ENCODE measurements at regions of chr9 and their contacts with region 1.

Region 1: DNA sequence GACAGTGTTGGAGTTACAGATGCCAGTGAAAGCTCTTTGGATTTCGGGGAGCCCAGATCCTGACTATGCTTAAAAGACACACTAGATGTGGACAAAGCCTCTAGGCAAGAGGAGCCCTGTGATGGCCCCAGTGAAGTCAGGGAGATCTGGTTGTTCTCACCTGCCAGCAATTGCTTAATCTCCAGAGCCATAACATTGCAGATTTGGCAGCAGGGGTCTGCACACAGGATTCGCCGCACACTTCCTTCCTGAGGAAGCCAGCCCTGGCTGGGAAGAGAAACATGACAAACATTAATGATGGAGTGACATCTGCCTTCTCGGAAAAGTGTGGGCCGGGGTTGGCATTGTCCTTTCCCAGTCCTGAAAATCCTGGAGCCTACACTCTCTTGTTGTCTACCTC is 65.2 kb upstream of the PHF24 start:
- DNase-seq: no peak
- H3K4me3 ChIP-seq: no peak overlapping the region
- H3K27ac ChIP-seq: peak overlapping the region in 1 of 2 donors; percentile 66
- H3K4me1 ChIP-seq: no peaks in the 10 kb centered on the region
- H3K27me3 ChIP-seq: no peaks in the 10 kb centered on the region
- CTCF ChIP-seq: no peak
- POLR2A ChIP-seq: no peak

Region 2: DNA sequence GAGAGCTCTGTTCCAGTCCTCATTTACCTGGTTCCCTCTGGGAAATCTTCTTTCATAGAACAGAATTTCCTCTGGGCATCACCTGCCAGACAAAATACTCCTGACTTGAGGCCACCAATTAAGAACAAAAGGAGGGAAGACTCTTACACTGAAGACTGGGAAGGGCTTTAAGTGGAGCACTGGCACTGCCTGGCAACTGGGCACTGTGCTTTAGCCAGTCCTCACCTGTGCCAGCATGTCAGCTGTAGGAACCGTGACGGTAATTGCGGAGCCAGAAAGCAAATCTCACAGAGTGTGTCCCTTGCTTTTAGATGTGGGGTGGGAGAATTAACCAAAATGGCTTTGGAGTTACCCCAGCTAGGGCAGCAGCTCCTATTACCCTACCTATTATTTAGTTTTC is 475.2 kb before region 1 on chr9:
- intact Hi-C with region 1: no loop called
- DNase-seq: no peak
- H3K4me3 ChIP-seq: no peak overlapping the region
- H3K27ac ChIP-seq: no peak overlapping the region
- H3K4me1 ChIP-seq: no peaks in the 10 kb centered on the region
- H3K27me3 ChIP-seq: no peaks in the 10 kb centered on the region
- CTCF ChIP-seq: no peak
- POLR2A ChIP-seq: no peak

Region 3: GRCh38 chr9:34907044-34907443 is 14.2 kb after region 1 on chr9:
- intact Hi-C with region 1: loop called (anchors 1 kb)
- DNase-seq: no peak
- H3K4me3 ChIP-seq: no peak overlapping the region
- H3K27ac ChIP-seq: no peak overlapping the region
- H3K4me1 ChIP-seq: no peaks in the 10 kb centered on the region
- H3K27me3 ChIP-seq: no peaks in the 10 kb centered on the region
- CTCF ChIP-seq: no peak
- POLR2A ChIP-seq: no peak